PC-3 (cell line): ENCODE measurements at regions of chr17 and their contacts with region 1.

Region 1: GRCh38 chr17:794876-795275 is 12.7 kb downstream of the MRM3 start:
- DNase-seq: peak; percentile 80
- ATAC-seq: peak; percentile 76
- H3K4me3 ChIP-seq: peak overlapping the region; percentile 51; the same call in 1 of the 2 replicates
- H3K27ac ChIP-seq: no peak overlapping the region
- H3K4me1 ChIP-seq: peaks cover 9% of the 10 kb centered on the region
- H3K27me3 ChIP-seq: no peaks in the 10 kb centered on the region
- CTCF ChIP-seq: peak; percentile 86

Region 2: DNA sequence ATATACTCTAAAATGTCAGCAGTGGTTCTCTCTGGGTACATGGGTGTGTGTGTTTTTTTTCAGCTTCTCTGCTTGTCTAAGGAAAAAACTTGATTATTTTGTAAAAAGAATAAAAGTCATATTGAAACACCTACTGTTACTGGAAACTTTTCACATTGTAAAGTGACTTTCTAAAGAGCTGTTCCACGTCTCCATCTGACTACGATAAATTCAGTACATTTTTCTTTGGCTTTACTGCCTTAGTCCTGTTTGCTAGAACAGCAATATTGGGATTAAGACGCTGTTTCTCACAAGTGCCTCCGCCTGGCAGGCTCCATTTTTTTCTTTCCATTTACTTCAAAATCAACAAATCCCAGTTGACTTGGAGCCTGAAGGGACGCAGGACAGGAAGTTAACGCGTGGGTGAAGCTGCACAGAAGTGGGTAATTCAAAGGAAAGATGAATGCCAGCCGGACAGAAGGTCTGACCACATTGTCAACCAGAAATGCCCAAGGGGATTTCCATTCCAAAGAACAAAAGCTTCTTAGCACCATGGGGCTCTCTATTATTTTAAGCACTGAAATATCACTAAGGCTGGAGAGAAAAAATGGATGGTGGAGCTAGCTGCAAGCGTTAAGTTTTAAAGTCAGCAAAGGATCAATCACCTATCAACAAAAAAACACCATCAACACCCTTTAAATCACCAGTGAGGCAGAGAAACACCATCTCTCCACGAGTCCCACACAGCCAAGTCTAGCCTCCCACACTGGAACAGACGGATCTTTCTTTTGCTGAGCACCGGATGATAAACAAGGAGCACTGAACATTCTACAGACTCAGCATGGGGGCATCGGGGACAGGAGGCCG is 21.2 kb before region 1 on chr17:
- CTCF ChIA-PET with region 1: no interaction called
- POLR2A ChIA-PET with region 1: no interaction called
- intact Hi-C with region 1: no loop called
- DNase-seq: no peak
- ATAC-seq: no peak
- H3K4me3 ChIP-seq: no peak overlapping the region
- H3K27ac ChIP-seq: no peak overlapping the region
- H3K4me1 ChIP-seq: no peaks in the 10 kb centered on the region
- H3K27me3 ChIP-seq: no peaks in the 10 kb centered on the region
- CTCF ChIP-seq: no peak

Region 3: GRCh38 chr17:879549-880442 is 84.9 kb after region 1 on chr17:
- CTCF ChIA-PET with region 1: interaction called, 4 read pairs
- POLR2A ChIA-PET with region 1: no interaction called
- intact Hi-C with region 1: loop called (anchors 2 kb)
- DNase-seq: peak; percentile 84
- ATAC-seq: peak; percentile 90
- H3K4me3 ChIP-seq: no peak overlapping the region
- H3K27ac ChIP-seq: no peak overlapping the region
- H3K4me1 ChIP-seq: no peaks in the 10 kb centered on the region; the same call in 1 of the 2 replicates
- H3K27me3 ChIP-seq: no peaks in the 10 kb centered on the region
- CTCF ChIP-seq: peak; percentile 62